PC-3 (cell line): ENCODE measurements at regions of chr12 and their contacts with region 1.

Region 1: DNA sequence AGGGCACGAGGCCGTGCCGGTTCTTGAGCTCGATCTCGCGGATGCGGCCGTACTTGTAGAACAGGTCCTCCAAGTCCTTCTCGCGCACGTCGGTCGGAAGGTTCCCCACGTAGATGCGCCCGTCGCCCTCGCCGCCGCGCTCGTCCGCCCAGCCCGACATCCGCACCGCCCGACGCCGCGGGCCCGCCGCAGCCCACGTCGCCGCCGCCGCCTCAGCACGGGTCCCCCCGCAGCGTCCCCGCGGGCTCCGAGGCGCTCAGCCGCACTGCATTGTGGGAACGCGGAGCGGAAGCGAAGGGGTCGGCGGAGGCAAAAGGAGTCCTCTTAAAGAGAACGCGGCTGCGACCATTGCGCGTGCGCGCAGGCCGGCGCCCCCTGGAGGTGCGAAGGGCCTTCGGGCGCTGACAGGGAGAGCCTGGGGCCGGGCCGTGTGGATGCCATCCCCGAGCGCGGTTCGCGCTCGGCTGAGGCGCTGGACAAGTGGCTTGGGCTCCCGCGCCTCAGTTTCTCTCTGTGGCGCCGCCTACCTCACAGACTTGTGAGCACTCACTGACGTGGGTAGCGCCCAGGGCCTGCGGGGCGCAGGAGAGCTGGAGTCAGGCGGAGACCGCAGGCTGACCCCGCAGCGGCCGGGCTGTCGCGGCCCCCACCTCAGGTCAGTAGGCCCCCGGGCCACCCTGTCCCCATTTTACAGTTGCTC is at the start of gene SRSF9:
- DNase-seq: peak; percentile 98
- ATAC-seq: peak; percentile 78
- H3K4me3 ChIP-seq: peak within 1 kb of the TSS; percentile 95
- H3K27ac ChIP-seq: peak within 1 kb of the TSS; percentile 66
- H3K4me1 ChIP-seq: peaks cover 34% of the 10 kb centered on the region
- H3K27me3 ChIP-seq: no peaks in the 10 kb centered on the region
- CTCF ChIP-seq: peak; percentile 92
- total RNA-seq, gene SRSF9: 319 and 382 TPM in 2 replicates

Region 2: GRCh38 chr12:120356567-120357030 is 113.0 kb before region 1 on chr12:
- CTCF ChIA-PET with region 1: no interaction called
- POLR2A ChIA-PET with region 1: no interaction called
- intact Hi-C with region 1: loop called (anchors 1 kb)
- DNase-seq: peak; percentile 85
- ATAC-seq: peak; percentile 95
- H3K4me3 ChIP-seq: no peak overlapping the region
- H3K27ac ChIP-seq: no peak overlapping the region
- H3K4me1 ChIP-seq: no peaks in the 10 kb centered on the region
- H3K27me3 ChIP-seq: no peaks in the 10 kb centered on the region
- CTCF ChIP-seq: peak; percentile 97

Region 3: GRCh38 chr12:120437754-120438494 is 31.7 kb before region 1 on chr12 and contains the start of gene COX6A1:
- CTCF ChIA-PET with region 1: interaction called, 5 read pairs
- POLR2A ChIA-PET with region 1: no interaction called
- intact Hi-C with region 1: loop called (anchors 2 kb)
- DNase-seq: peak; percentile 100
- ATAC-seq: peak; percentile 98
- H3K4me3 ChIP-seq: peak within 1 kb of the TSS; percentile 83
- H3K27ac ChIP-seq: peak within 1 kb of the TSS; percentile 31
- H3K4me1 ChIP-seq: peaks cover 15% of the 10 kb centered on the region
- H3K27me3 ChIP-seq: no peaks in the 10 kb centered on the region
- CTCF ChIP-seq: no peak
- total RNA-seq, gene COX6A1: 1,664 and 2,042 TPM in 2 replicates

Region 4: DNA sequence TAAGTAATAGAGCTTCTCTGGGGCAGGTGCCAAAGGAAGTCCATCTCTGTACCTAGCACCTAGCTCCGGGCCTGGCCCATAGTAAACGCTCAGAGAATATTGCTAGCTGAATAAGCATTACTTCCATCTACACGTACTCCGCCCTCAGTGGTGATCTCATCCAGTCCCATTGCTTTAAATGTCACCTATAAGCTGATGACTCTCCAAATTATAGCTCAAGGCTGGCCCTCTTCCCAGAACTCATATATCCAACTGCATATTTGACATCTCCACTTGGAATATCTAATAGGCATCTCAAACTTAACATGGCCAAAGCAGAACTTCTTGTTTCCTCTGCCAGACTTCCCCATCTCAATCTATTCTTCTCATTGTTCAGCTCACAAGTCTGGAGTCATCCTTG is 19.4 kb after region 1 on chr12:
- CTCF ChIA-PET with region 1: interaction called, 4 read pairs
- POLR2A ChIA-PET with region 1: no interaction called
- intact Hi-C with region 1: loop called (anchors 1 kb)
- DNase-seq: peak; percentile 82
- ATAC-seq: peak; percentile 96
- H3K4me3 ChIP-seq: no peak overlapping the region
- H3K27ac ChIP-seq: no peak overlapping the region
- H3K4me1 ChIP-seq: peaks cover 13% of the 10 kb centered on the region
- H3K27me3 ChIP-seq: no peaks in the 10 kb centered on the region
- CTCF ChIP-seq: no peak

Region 5: GRCh38 chr12:120495723-120496412 is 26.3 kb after region 1 on chr12 and contains the start of gene DYNLL1:
- CTCF ChIA-PET with region 1: no interaction called
- POLR2A ChIA-PET with region 1: interaction called, 5 read pairs
- intact Hi-C with region 1: loop called (anchors 1 kb)
- DNase-seq: peak; percentile 99
- ATAC-seq: peak; percentile 92
- H3K4me3 ChIP-seq: peak within 1 kb of the TSS; percentile 95
- H3K27ac ChIP-seq: peak within 1 kb of the TSS; percentile 54
- H3K4me1 ChIP-seq: peaks cover 24% of the 10 kb centered on the region
- H3K27me3 ChIP-seq: no peaks in the 10 kb centered on the region
- CTCF ChIP-seq: no peak
- total RNA-seq, gene DYNLL1: 283 and 396 TPM in 2 replicates

Region 6: DNA sequence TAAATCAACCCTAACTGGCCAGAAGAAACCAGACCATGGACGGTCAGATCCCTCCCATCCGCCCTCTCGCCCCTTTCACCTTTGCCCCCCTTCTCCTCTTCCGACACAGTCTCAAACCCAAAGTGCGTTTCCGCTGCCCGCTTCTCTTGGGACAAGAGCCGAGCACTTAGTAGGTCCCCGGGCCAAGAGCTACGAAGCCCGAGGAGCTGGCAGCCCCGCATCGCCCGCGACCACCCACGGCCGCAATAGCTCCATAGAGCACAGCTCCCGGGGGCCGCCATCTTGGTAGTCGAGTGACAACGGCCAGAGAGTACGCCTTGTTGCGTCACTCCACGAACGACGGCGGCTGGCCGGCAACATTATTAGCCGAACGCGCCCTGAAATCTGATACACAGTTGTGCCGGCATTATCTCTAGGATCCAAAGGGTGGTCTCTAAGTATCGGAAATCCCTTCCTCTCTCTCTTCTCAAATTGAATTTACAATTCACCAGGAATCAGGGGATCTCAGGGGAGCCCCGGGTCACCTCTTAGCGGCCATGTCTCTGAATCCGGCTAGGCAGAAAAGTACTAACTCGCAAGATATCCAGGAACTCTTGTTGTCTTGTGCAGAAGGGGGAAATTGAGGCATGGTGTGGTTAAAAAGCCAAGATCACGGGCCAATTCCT is 59.4 kb after region 1 on chr12 and contains the start of gene COQ5:
- CTCF ChIA-PET with region 1: no interaction called
- POLR2A ChIA-PET with region 1: interaction called, 4 read pairs
- intact Hi-C with region 1: loop called (anchors 2 kb)
- DNase-seq: peak; percentile 87
- ATAC-seq: peak; percentile 63
- H3K4me3 ChIP-seq: peak within 1 kb of the TSS; percentile 98
- H3K27ac ChIP-seq: peak within 1 kb of the TSS; percentile 86
- H3K4me1 ChIP-seq: peaks cover 39% of the 10 kb centered on the region
- H3K27me3 ChIP-seq: no peaks in the 10 kb centered on the region
- CTCF ChIP-seq: no peak
- total RNA-seq, gene COQ5: 40.4 and 41.2 TPM in 2 replicates